ENCODE measurements at regions of chr3 and their contacts with region 1.

Region 1: GRCh38 chr3:190811775-190812480 is 50.6 kb downstream of the GMNC start:
- DNase-seq: no peak
- ATAC-seq: peak in 1 of 2 donors; percentile 39
- H3K4me3 ChIP-seq: peak overlapping the region in 1 of 4 donors; percentile 1
- H3K27ac ChIP-seq: no peak overlapping the region
- H3K4me1 ChIP-seq: peaks cover 0 to 14% of the 10 kb centered on the region in 2 donors
- H3K27me3 ChIP-seq: no peaks in the 10 kb centered on the region
- CTCF ChIP-seq: peak; percentile 18 to 57 (median 38)
- POLR2A ChIP-seq: no peak

Region 2: DNA sequence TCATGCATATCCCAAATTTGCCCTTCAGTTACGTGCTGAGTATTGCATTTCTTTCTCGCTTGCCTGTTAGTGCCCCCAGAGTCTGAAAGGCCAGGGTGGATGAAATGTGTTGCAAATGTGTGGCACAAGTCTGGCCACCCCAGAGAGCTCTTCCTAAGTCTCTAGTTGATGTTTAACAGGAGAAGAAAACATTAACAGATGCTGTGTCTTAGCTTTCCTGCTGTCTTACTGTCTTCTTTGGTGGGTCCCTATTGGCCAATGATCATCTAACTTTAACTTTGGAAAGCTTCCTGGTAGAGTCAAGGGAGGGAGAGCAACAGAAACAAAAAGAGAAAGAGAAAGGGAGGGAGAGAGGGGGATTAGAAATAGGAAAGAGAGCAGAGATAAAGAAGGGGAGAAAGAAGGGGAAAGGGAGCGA is 614.6 kb before region 1 on chr3:
- in situ Hi-C with region 1: no loop called
- intact Hi-C with region 1: no loop called
- DNase-seq: no peak
- ATAC-seq: no peak
- H3K4me3 ChIP-seq: no peak overlapping the region
- H3K27ac ChIP-seq: no peak overlapping the region
- H3K4me1 ChIP-seq: no peaks in the 10 kb centered on the region
- H3K27me3 ChIP-seq: no peaks in the 10 kb centered on the region
- CTCF ChIP-seq: no peak
- POLR2A ChIP-seq: no peak

Region 3: GRCh38 chr3:190862209-190863118 is 50.5 kb after region 1 on chr3 and contains the start of gene GMNC:
- in situ Hi-C with region 1: no loop called
- intact Hi-C with region 1: loop called (anchors 1 kb)
- DNase-seq: peak; percentile 78 to 82
- ATAC-seq: peak; percentile 98
- H3K4me3 ChIP-seq: peak within 1 kb of the TSS; percentile 55 to 73 (median 64)
- H3K27ac ChIP-seq: peak within 1 kb of the TSS; percentile 67 to 87 (median 81)
- H3K4me1 ChIP-seq: no peaks in the 10 kb centered on the region
- H3K27me3 ChIP-seq: no peaks in the 10 kb centered on the region
- CTCF ChIP-seq: no peak
- POLR2A ChIP-seq: peak; percentile 68 to 82
- total RNA-seq, gene GMNC: not detected

Region 4: DNA sequence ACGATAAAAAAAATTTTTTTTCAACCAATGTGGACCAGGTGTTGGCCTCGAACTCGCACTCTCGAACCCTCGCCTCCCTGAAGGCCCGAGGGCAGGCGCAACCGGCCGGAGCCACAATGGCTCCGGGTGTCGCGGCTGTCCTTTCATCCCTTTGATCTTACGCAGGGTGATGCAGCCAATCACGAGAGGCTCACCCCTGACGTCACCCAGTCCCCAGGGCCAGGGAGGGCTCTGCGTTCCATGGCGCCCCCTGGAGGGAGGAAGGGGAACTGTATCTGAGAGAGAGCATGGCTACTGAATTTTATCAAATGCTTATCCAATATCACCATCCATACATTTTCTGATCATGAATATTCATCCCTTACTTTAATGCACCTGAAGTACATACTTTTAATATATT is 66.0 kb after region 1 on chr3:
- in situ Hi-C with region 1: no loop called
- intact Hi-C with region 1: no loop called
- DNase-seq: no peak
- ATAC-seq: no peak
- H3K4me3 ChIP-seq: no peak overlapping the region
- H3K27ac ChIP-seq: no peak overlapping the region
- H3K4me1 ChIP-seq: no peaks in the 10 kb centered on the region
- H3K27me3 ChIP-seq: no peaks in the 10 kb centered on the region
- CTCF ChIP-seq: peak in 1 of 5 experiments; percentile 13
- POLR2A ChIP-seq: no peak

Region 5: DNA sequence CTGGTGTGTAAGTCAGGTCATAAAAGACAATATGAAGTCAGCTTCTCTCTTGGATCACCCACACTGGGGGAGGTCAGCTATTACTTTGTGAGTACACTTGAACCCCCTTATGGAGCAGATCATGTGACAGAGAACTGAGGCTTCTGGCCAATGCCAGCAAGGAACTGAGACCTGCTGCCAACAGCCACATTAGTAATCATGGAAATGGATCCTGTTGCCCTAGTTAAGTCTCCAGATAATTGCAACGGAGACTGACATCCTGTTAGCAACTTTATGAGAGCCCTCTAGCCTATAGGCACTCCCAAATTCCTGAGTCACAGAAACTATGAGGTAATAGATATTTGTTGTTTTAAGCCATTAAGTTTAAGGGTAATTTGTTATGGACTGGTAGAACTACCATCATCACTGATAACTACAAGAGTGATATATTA is 160.9 kb after region 1 on chr3:
- in situ Hi-C with region 1: no loop called
- intact Hi-C with region 1: no loop called
- DNase-seq: no peak
- ATAC-seq: no peak
- H3K4me3 ChIP-seq: no peak overlapping the region
- H3K27ac ChIP-seq: no peak overlapping the region
- H3K4me1 ChIP-seq: no peaks in the 10 kb centered on the region
- H3K27me3 ChIP-seq: no peaks in the 10 kb centered on the region
- CTCF ChIP-seq: no peak
- POLR2A ChIP-seq: no peak

Region 6: GRCh38 chr3:191051037-191051436 is 239.1 kb after region 1 on chr3:
- in situ Hi-C with region 1: no loop called
- intact Hi-C with region 1: loop called (anchors 5 kb)
- DNase-seq: no peak
- ATAC-seq: no peak
- H3K4me3 ChIP-seq: no peak overlapping the region
- H3K27ac ChIP-seq: no peak overlapping the region
- H3K4me1 ChIP-seq: no peaks in the 10 kb centered on the region
- H3K27me3 ChIP-seq: no peaks in the 10 kb centered on the region
- CTCF ChIP-seq: peak in 3 of 5 experiments; percentile 17 to 32 (median 30)
- POLR2A ChIP-seq: no peak